ENCODE measurements at regions of chr17 and their contacts with region 1.

Region 1: GRCh38 chr17:66906321-66907278 is 57.9 kb upstream of the CACNG4 start:
- DNase-seq: peak; percentile 85
- H3K4me3 Mint-ChIP-seq: no peak overlapping the region
- H3K27ac Mint-ChIP-seq: no peak overlapping the region
- H3K4me1 Mint-ChIP-seq: peaks cover 4% of the 10 kb centered on the region
- H3K27me3 Mint-ChIP-seq: no peaks in the 10 kb centered on the region

Region 2: GRCh38 chr17:66514227-66514806 is 392.3 kb before region 1 on chr17:
- CTCF ChIA-PET with region 1: no interaction called
- intact Hi-C with region 1: loop called (anchors 5 kb)
- DNase-seq: peak; percentile 42
- H3K4me3 Mint-ChIP-seq: no peak overlapping the region
- H3K27ac Mint-ChIP-seq: no peak overlapping the region
- H3K4me1 Mint-ChIP-seq: peaks cover 89% of the 10 kb centered on the region
- H3K27me3 Mint-ChIP-seq: no peaks in the 10 kb centered on the region

Region 3: DNA sequence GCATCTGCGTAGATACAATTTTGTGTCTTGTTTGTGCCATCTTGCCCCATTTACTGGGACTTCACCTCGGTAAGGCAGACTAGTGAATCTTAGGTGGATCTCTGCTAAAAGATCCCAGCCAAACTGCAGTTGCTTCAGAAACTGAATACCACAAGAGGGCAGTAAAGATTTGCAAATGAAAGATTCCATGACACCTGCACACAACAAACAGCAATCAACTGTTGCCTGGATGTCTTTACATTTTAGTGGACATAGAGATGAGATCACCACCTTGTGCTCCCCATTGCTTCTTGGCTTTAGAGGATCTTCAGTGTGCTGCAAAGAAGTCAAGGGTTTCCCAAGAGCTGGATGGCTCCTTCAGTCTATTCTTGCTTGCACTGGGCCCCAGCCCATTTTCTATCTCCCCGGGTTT is 190.8 kb before region 1 on chr17:
- CTCF ChIA-PET with region 1: interaction called, 3 read pairs
- intact Hi-C with region 1: loop called (anchors 1 kb)
- DNase-seq: peak; percentile 12
- H3K4me3 Mint-ChIP-seq: no peak overlapping the region
- H3K27ac Mint-ChIP-seq: no peak overlapping the region
- H3K4me1 Mint-ChIP-seq: peaks cover 22% of the 10 kb centered on the region
- H3K27me3 Mint-ChIP-seq: no peaks in the 10 kb centered on the region

Region 4: GRCh38 chr17:66727639-66728570 is 178.7 kb before region 1 on chr17:
- CTCF ChIA-PET with region 1: interaction called, 3 read pairs
- intact Hi-C with region 1: loop called (anchors 1 kb)
- DNase-seq: peak; percentile 65
- H3K4me3 Mint-ChIP-seq: no peak overlapping the region
- H3K27ac Mint-ChIP-seq: no peak overlapping the region
- H3K4me1 Mint-ChIP-seq: peaks cover 2% of the 10 kb centered on the region
- H3K27me3 Mint-ChIP-seq: no peaks in the 10 kb centered on the region

Region 5: DNA sequence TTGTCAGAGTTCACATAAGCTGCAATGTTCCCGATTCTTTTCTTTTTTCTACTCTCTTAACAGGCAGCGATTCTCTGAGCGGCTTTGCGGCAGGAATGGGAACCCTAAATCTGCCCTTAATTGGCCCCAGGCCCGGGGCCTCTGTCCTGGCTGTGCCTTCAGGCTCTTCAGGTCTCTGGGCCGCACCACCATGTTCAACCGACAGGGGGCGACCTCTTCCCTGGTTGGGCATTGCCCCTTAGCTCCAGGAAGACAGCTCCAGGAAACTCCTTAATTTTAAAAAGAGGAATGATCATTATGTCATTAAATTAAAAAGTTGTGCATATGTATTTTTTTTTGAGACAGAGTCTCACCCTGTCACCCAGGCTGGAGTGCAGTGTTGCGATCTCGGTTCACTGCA is 51.4 kb before region 1 on chr17:
- CTCF ChIA-PET with region 1: no interaction called
- intact Hi-C with region 1: loop called (anchors 5 kb)
- DNase-seq: peak; percentile 51
- H3K4me3 Mint-ChIP-seq: no peak overlapping the region
- H3K27ac Mint-ChIP-seq: no peak overlapping the region
- H3K4me1 Mint-ChIP-seq: no peaks in the 10 kb centered on the region
- H3K27me3 Mint-ChIP-seq: peaks cover under 1% of the 10 kb centered on the region

Measured in activated naive CD4-positive, alpha-beta T cell treated with anti-CD3 and anti-CD28 coated beads for 36 hours (primary cell).